WTC11 (cell line): ENCODE measurements at regions of chr11 and their contacts with region 1.

Region 1: DNA sequence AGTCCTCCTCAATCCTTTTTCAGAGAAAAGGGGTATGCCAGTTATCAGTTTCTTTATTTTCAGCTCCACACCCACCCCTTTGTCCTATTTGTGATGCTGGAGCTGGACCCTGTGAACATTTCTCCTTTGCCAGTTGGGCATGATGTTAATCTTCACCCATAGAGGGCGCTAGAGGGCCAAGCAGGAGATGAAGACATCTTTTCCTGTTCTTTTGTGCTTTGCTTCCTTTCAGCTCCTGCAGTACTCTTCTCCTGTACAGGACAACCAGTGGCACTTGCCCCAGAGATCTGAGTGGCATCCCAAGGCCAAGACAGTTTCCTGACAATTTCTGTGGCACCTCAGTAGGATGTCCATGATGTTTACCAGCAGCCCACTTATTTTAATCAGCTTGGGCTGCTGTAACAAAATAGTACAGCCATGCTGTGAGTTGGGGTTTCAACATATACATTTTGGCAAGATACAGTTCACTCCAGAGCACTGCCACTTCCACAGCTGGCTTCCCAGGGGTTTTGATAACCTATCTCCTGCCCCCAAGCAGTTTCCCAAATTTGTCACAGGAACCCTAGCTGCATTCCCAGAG is 4.6 kb downstream of the SAA2 start:
- DNase-seq: peak; percentile 70
- ATAC-seq: peak; percentile 89
- H3K4me3 Mint-ChIP-seq: no peak overlapping the region
- H3K27ac Mint-ChIP-seq: no peak overlapping the region
- H3K4me1 Mint-ChIP-seq: no peaks in the 10 kb centered on the region
- H3K27me3 Mint-ChIP-seq: peaks cover 6% of the 10 kb centered on the region; the same call in 1 of the 2 replicates
- CTCF ChIP-seq: peak; percentile 89

Region 2: GRCh38 chr11:18229501-18229900 is 14.4 kb before region 1 on chr11:
- CTCF ChIA-PET with region 1: interaction called, 17 read pairs
- POLR2A ChIA-PET with region 1: no interaction called
- DNase-seq: no peak
- ATAC-seq: no peak
- H3K4me3 Mint-ChIP-seq: no peak overlapping the region
- H3K27ac Mint-ChIP-seq: no peak overlapping the region
- H3K4me1 Mint-ChIP-seq: no peaks in the 10 kb centered on the region
- H3K27me3 Mint-ChIP-seq: no peaks in the 10 kb centered on the region
- CTCF ChIP-seq: no peak

Region 3: GRCh38 chr11:18265949-18266348 is 22.1 kb after region 1 on chr11 and contains the start of gene SAA1:
- CTCF ChIA-PET with region 1: interaction called, 40 read pairs
- POLR2A ChIA-PET with region 1: no interaction called
- DNase-seq: no peak
- ATAC-seq: no peak
- H3K4me3 Mint-ChIP-seq: no peak within 1 kb of the TSS
- H3K27ac Mint-ChIP-seq: no peak within 1 kb of the TSS
- H3K4me1 Mint-ChIP-seq: peaks cover 7% of the 10 kb centered on the region; the same call in 1 of the 2 replicates
- H3K27me3 Mint-ChIP-seq: no peaks in the 10 kb centered on the region
- CTCF ChIP-seq: no peak
- total RNA-seq, gene SAA1: 7.7 to 12.8 TPM (median 8.8 TPM) in 3 replicates

Region 4: GRCh38 chr11:18315893-18316292 is 72.0 kb after region 1 on chr11:
- CTCF ChIA-PET with region 1: interaction called, 10 read pairs
- POLR2A ChIA-PET with region 1: no interaction called
- DNase-seq: no peak
- ATAC-seq: no peak
- H3K4me3 Mint-ChIP-seq: no peak overlapping the region
- H3K27ac Mint-ChIP-seq: no peak overlapping the region
- H3K4me1 Mint-ChIP-seq: peaks cover 14% of the 10 kb centered on the region
- H3K27me3 Mint-ChIP-seq: no peaks in the 10 kb centered on the region
- CTCF ChIP-seq: no peak

Region 5: GRCh38 chr11:18395735-18396504 is 152.0 kb after region 1 on chr11:
- CTCF ChIA-PET with region 1: interaction called, 12 read pairs
- POLR2A ChIA-PET with region 1: no interaction called
- DNase-seq: peak; percentile 97
- ATAC-seq: peak; percentile 86
- H3K4me3 Mint-ChIP-seq: peak overlapping the region; percentile 98
- H3K27ac Mint-ChIP-seq: peak overlapping the region; percentile 96
- H3K4me1 Mint-ChIP-seq: peaks cover 25% of the 10 kb centered on the region
- H3K27me3 Mint-ChIP-seq: peaks cover 9% of the 10 kb centered on the region
- CTCF ChIP-seq: no peak

Region 6: GRCh38 chr11:19218786-19219460 is 975.0 kb after region 1 on chr11:
- CTCF ChIA-PET with region 1: no interaction called
- POLR2A ChIA-PET with region 1: no interaction called
- DNase-seq: no peak
- ATAC-seq: no peak
- H3K4me3 Mint-ChIP-seq: no peak overlapping the region
- H3K27ac Mint-ChIP-seq: no peak overlapping the region
- H3K4me1 Mint-ChIP-seq: peaks cover 7% of the 10 kb centered on the region
- H3K27me3 Mint-ChIP-seq: no peaks in the 10 kb centered on the region
- CTCF ChIP-seq: no peak